ENCODE measurements at regions of chr12 and their contacts with region 1.

Region 1: GRCh38 chr12:95358111-95359083 is 115.6 kb upstream of the METAP2 start:
- DNase-seq: peak; percentile 67
- H3K4me3 ChIP-seq: peak overlapping the region; percentile 55
- H3K27ac ChIP-seq: peak overlapping the region; percentile 70
- H3K4me1 ChIP-seq: peaks cover 65% of the 10 kb centered on the region
- CTCF ChIP-seq: no peak

Region 2: GRCh38 chr12:95343461-95344230 is 14.8 kb before region 1 on chr12:
- CTCF ChIA-PET with region 1: interaction called, 5 read pairs
- POLR2A ChIA-PET with region 1: interaction called, 51 read pairs
- intact Hi-C with region 1: no loop called
- DNase-seq: peak; percentile 85
- H3K4me3 ChIP-seq: peak overlapping the region; percentile 29
- H3K27ac ChIP-seq: peak overlapping the region; percentile 94
- H3K4me1 ChIP-seq: peaks cover 92% of the 10 kb centered on the region
- CTCF ChIP-seq: peak; percentile 4; the same call in 1 of the 2 replicates

Region 3: DNA sequence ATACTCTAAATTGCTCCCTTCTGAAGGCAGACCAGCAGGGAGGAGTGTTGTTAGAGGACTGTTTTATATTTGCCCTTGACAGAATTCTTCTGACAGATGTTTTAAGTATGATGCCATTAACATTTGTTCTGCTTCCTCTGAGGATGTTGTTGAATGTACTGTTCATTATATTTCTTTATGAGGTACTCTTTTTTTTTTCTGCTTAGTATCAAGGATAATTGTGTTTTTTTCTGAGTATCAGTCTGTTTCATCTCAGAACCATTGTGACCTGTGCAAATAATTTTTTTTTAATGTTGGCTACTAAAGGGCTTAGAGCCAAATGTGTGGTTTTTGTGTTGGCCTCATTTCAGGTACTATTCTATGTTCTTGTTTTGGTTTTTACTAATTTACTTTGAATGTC is 126.1 kb after region 1 on chr12:
- CTCF ChIA-PET with region 1: no interaction called
- POLR2A ChIA-PET with region 1: no interaction called
- intact Hi-C with region 1: no loop called
- DNase-seq: no peak
- H3K4me3 ChIP-seq: no peak overlapping the region
- H3K27ac ChIP-seq: no peak overlapping the region
- H3K4me1 ChIP-seq: peaks cover 16% of the 10 kb centered on the region
- CTCF ChIP-seq: no peak

Measured in OCI-LY7 (cell line).